ENCODE measurements at regions of chr17 and their contacts with region 1.

Region 1: DNA sequence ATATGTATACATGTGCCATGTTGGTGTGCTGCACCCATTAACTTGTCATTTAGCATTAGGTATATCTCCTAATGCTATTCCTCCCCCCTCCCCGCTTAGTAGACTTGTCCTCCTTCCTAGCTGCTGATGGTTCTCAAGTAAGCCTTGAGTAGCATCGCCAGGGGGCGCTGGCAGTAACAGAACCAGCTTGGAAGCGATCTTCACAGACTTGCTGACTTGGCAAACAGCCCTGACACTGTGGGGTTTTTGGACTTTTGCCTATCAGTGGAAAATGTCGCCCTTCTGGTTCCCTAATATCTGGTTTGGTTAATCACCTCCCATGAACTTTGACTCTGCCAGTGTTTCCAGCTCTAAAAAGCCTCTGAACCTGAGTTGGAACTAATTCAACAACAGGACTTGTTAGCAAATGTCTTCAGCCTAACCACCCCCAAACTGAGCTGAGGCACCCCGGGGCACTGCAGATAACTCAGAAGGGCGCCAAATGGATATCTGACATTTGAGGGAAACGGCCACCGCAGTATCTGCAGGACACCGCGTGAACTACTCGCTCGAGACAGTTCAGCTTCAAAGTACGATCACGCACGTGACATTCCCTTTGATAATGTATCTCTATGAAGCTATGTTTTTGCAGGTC is 15.4 kb upstream of the SPATA32 start:
- DNase-seq: peak; percentile 89 to 94 (median 92)
- H3K4me3 ChIP-seq: no peak overlapping the region
- H3K27ac ChIP-seq: peak overlapping the region in 1 of 2 donors; percentile 35
- H3K4me1 ChIP-seq: peaks cover 10% of the 10 kb centered on the region
- H3K27me3 ChIP-seq: no peaks in the 10 kb centered on the region
- CTCF ChIP-seq: peak; percentile 54 to 87 (median 84)
- EP300 ChIP-seq: no peak
- POLR2A ChIP-seq: no peak

Region 2: GRCh38 chr17:45228763-45229539 is 48.4 kb before region 1 on chr17:
- intact Hi-C with region 1: loop called in 1 of 4 experiments (anchors 10 kb)
- DNase-seq: peak; percentile 61 to 81 (median 74)
- H3K4me3 ChIP-seq: no peak overlapping the region
- H3K27ac ChIP-seq: no peak overlapping the region
- H3K4me1 ChIP-seq: no peaks in the 10 kb centered on the region
- H3K27me3 ChIP-seq: no peaks in the 10 kb centered on the region
- CTCF ChIP-seq: no peak
- EP300 ChIP-seq: no peak
- POLR2A ChIP-seq: no peak

Region 3: DNA sequence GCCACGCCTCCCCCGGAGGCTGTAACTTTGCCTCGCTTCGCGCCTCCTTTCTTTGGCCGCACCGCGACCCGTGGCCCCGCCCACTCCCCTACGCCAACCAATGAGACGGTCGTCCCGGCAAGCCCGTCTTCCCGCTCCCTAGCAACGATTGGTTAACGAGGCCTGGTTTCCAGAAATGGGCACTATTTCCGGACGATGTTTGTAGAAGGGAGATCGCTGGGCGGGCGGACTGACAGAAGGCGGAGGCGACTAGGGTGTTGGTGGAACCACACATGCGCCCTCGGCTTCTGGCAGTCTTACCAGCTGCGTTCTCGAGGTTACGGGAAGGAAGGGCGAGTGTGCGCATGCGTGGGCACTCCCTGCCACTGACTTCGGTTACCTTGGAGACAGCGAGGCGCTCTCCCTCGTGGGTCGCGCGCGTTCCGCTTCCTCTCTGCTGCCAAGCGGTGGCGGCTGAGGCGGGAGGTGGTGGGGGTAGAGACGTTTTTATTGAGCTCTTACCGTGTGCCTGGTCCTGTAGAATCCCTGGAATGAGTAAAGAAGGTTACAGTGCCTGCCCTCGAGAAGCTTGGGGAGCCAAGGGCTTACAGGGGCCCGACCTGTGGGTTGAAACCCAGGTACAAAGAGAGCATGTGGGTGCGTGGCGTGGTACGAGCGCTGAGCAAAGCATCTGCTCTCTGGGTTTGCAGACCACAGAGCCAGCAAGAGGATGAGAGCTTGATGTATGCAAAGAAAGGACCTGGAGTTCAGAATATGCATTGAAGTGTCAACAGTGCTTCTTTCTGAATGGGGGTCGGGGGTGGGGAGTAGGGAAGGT is 40.0 kb after region 1 on chr17:
- intact Hi-C with region 1: loop called in 1 of 4 experiments (anchors 5 kb)
- DNase-seq: peak; percentile 100
- H3K4me3 ChIP-seq: peak overlapping the region; percentile 69
- H3K27ac ChIP-seq: peak overlapping the region in 1 of 2 donors; percentile 92
- H3K4me1 ChIP-seq: peaks cover 2% of the 10 kb centered on the region
- H3K27me3 ChIP-seq: no peaks in the 10 kb centered on the region
- CTCF ChIP-seq: no peak
- EP300 ChIP-seq: peak; percentile 35
- POLR2A ChIP-seq: peak; percentile 48

Region 4: DNA sequence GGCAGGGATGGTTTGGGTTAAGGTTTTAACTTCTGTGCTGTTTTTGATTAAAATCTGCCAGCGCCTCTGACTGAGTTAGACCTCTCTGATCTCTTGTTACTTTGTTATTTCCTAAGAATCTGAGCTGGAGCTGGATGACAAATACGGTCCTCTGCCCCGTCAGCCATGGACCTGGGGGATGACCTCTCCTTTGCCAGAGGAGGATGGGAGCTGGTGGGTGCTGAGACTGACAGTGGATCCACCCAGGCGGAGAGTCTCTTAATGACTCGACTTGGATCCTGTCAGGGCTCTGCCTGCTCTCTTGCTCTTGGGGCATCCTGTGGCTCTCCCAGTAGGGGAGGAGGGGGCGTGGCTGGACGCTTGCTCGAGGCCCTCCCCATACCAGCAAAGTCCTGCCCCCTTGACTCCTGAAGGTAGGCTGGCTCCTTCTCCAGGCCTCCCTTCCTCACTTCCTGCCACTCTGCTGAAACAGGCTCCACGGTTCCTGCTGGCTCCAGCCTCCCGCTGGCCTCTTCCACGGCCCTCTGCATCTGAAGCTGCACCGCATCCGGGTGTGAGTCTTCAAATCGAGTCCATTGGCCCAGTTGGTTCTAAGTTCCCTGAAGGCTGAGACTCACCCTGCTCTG is 64.3 kb after region 1 on chr17:
- intact Hi-C with region 1: no loop called
- DNase-seq: peak in 2 of 5 donors; percentile 32 to 42
- H3K4me3 ChIP-seq: no peak overlapping the region
- H3K27ac ChIP-seq: no peak overlapping the region
- H3K4me1 ChIP-seq: peaks cover 16% of the 10 kb centered on the region
- H3K27me3 ChIP-seq: no peaks in the 10 kb centered on the region
- CTCF ChIP-seq: no peak
- EP300 ChIP-seq: no peak
- POLR2A ChIP-seq: no peak